Psoas muscle (tissue), 8 donors: ENCODE measurements at regions of chr5 and their contacts with region 1.

Region 1: GRCh38 chr5:78537821-78538220 is 110.8 kb downstream of the LHFPL2 start:
- DNase-seq: no peak
- ATAC-seq: peak; percentile 68 to 87 (median 82)
- H3K4me3 ChIP-seq: no peak overlapping the region
- H3K27ac ChIP-seq: no peak overlapping the region
- H3K4me1 ChIP-seq: no peaks in the 10 kb centered on the region
- H3K27me3 ChIP-seq: no peaks in the 10 kb centered on the region
- CTCF ChIP-seq: peak; percentile 57

Region 2: DNA sequence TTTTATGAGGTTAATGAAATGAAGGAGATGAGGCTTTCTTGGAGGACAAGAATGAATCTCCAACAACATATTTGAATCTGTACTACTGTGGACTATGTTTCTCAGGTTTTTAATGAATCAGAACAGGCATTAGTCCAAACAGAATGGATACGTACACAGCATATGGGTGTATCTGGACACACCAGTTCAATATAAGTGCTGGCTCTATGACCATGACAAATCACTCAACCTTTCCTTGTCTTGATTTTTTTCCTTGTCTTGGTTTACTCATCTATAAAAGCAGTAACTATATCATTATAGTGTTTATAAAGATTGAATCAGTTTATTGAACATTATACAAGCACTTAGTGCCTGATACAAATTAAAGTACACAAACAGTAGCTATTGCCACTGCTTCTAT is 347.4 kb before region 1 on chr5:
- intact Hi-C with region 1: no loop called
- DNase-seq: no peak
- ATAC-seq: no peak
- H3K4me3 ChIP-seq: no peak overlapping the region
- H3K27ac ChIP-seq: no peak overlapping the region
- H3K4me1 ChIP-seq: no peaks in the 10 kb centered on the region
- H3K27me3 ChIP-seq: no peaks in the 10 kb centered on the region
- CTCF ChIP-seq: no peak

Region 3: GRCh38 chr5:78648359-78649210 is 110.8 kb after region 1 on chr5 and contains the start of gene LHFPL2:
- intact Hi-C with region 1: loop called in 1 of 2 experiments (anchors 5 kb)
- DNase-seq: peak; percentile 78 to 88
- ATAC-seq: peak; percentile 73 to 87 (median 78)
- H3K4me3 ChIP-seq: peak within 1 kb of the TSS; percentile 67
- H3K27ac ChIP-seq: peak within 1 kb of the TSS; percentile 84
- H3K4me1 ChIP-seq: peaks cover 5% of the 10 kb centered on the region
- H3K27me3 ChIP-seq: no peaks in the 10 kb centered on the region
- CTCF ChIP-seq: no peak
- total RNA-seq, gene LHFPL2: 3.6 to 6.4 (median 4.8) TPM

Region 4: DNA sequence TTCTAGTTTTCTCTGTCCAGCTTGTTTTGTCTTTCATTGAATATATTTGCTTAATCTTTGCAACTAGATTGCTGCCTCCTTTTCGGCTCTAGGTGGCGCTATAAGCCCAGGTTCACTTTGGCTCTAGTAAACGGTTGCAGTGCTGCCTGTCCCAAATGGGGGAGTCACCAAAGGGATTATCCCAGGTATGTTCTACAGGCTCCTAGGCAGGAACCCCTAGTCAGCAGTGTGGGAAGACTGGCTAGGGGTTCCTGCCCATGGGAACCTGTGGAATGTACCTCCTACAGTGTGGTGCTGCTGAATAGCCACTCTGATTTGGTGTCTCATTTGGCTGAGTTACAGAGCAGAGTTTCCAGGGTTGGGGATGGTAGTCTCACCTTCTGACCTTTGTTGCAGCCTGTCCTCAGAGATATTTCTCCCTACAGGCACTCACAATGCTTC is 362.1 kb after region 1 on chr5:
- intact Hi-C with region 1: loop called in 1 of 2 experiments (anchors 10 kb)
- DNase-seq: no peak
- ATAC-seq: peak in 2 of 4 donors; percentile 45 to 60
- H3K4me3 ChIP-seq: no peak overlapping the region
- H3K27ac ChIP-seq: no peak overlapping the region
- H3K4me1 ChIP-seq: no peaks in the 10 kb centered on the region
- H3K27me3 ChIP-seq: no peaks in the 10 kb centered on the region
- CTCF ChIP-seq: peak; percentile 61

Region 5: GRCh38 chr5:78964887-78965286 is 427.1 kb after region 1 on chr5:
- intact Hi-C with region 1: loop called in 1 of 2 experiments (anchors 2 kb)
- DNase-seq: no peak
- ATAC-seq: peak; percentile 68 to 83 (median 82)
- H3K4me3 ChIP-seq: no peak overlapping the region
- H3K27ac ChIP-seq: no peak overlapping the region
- H3K4me1 ChIP-seq: no peaks in the 10 kb centered on the region
- H3K27me3 ChIP-seq: no peaks in the 10 kb centered on the region
- CTCF ChIP-seq: peak; percentile 64